Activated T-helper 1 cell treated with anti-CD3 and anti-CD28 coated beads, Interleukin-12 subunit alpha, Interleukin-12 subunit beta, Interleukin-2, Interleukin-4 antibody, amounts not matched to agents 30 ng/mL and 10 ng/mL and 1 ng/mL, durations not matched to agents 14 hours and 24 hours and 36 hours (primary cell): ENCODE measurements at regions of chr16 and their contacts with region 1.

Region 1: GRCh38 chr16:78794581-78795250 is 695.3 kb downstream of the WWOX start:
- DNase-seq: no peak
- H3K4me3 Mint-ChIP-seq: no peak overlapping the region
- H3K27ac Mint-ChIP-seq: peak overlapping the region; percentile 77
- H3K4me1 Mint-ChIP-seq: peaks cover 35% of the 10 kb centered on the region
- H3K27me3 Mint-ChIP-seq: no peaks in the 10 kb centered on the region

Region 2: GRCh38 chr16:78836802-78837491 is 42.2 kb after region 1 on chr16:
- intact Hi-C with region 1: loop called (anchors 5 kb)
- DNase-seq: no peak
- H3K4me3 Mint-ChIP-seq: peak overlapping the region; percentile 25
- H3K27ac Mint-ChIP-seq: peak overlapping the region; percentile 86
- H3K4me1 Mint-ChIP-seq: peaks cover 11% of the 10 kb centered on the region
- H3K27me3 Mint-ChIP-seq: peaks cover 3% of the 10 kb centered on the region

Region 3: DNA sequence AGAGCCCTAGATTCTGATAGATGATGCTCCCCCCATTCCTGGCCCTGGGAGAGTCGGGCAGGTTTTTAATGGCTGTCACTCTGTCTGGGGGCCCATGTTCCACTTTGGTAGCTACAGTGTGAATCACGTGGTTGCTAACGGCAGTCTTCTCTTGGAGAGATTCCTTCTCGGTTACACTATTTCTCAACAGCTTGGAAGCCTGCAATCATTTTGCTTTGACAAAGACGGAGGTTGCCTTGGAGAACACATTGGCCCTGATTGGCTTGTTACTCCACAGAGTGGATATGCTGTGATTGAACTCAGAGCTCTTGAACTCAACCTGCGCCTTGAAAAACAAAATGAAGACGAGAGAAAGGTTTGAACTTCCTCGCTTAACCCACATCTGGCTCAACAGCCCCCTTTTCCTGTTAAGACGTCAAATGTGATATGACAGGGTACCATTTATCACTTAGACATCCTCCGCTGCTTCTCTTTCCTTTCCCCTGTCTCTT is 586.9 kb after region 1 on chr16:
- intact Hi-C with region 1: no loop called
- DNase-seq: no peak
- H3K4me3 Mint-ChIP-seq: no peak overlapping the region
- H3K27ac Mint-ChIP-seq: no peak overlapping the region
- H3K4me1 Mint-ChIP-seq: peaks cover 18% of the 10 kb centered on the region
- H3K27me3 Mint-ChIP-seq: peaks cover 17% of the 10 kb centered on the region